ENCODE measurements at regions of chr10 and their contacts with region 1.

Region 1: GRCh38 chr10:119028900-119029612 is 458 bp upstream of the NANOS1 start:
- DNase-seq: peak; percentile 88 to 91
- ATAC-seq: peak; percentile 61 to 84
- H3K4me3 ChIP-seq: peak overlapping the region; percentile 83
- H3K27ac ChIP-seq: peak overlapping the region; percentile 82 to 85
- H3K4me1 ChIP-seq: peaks cover 31% of the 10 kb centered on the region
- CTCF ChIP-seq: no peak
- EP300 ChIP-seq: no peak
- POLR2A ChIP-seq: no peak
- RAD21 ChIP-seq: peak in 1 of 2 experiments; percentile 12; a peak in 1 of 5 replicates

Region 2: DNA sequence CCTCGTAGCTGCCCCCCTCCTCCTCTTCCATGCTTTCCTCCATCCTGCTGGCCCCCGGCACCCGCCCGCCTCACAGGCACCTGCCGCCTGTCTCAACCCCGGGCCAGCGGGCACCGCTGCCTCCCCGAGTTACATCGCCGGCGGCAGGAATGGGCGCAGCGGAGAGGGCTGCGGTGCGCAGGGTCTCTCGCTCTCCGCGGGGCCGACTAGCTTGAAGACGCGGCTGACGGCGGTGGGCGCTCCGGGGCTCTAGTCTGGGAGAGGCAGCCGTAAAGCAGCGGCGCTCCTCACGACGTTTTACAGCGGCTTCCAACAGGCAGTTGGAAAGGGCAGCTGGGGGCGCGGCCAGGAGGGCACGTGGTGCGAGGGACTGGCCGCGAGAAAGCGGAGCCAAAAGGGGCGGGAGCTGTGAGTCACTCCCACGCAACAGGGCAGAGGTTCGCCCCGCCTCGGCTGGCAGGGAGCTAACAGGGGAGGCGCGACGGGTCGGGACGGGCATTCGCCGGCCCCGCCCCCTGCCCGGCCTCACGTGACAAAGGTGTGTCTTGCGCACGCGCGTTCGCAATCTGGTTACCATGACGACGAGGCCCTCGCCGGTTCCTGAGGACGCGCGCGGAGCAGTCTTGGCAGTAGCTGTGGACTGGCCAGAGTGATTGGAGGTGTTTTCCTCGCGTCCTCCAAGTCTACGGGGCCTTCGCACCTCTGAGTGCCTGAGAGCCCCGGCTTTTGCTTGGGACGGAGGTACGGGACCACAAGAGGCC is 274.2 kb before region 1 on chr10 and contains the start of gene CACUL1:
- CTCF ChIA-PET with region 1: no interaction called
- POLR2A ChIA-PET with region 1: interaction called, 12 read pairs
- DNase-seq: peak; percentile 88 to 100
- ATAC-seq: peak; percentile 89 to 96
- H3K4me3 ChIP-seq: peak within 1 kb of the TSS; percentile 98
- H3K27ac ChIP-seq: peak within 1 kb of the TSS; percentile 92 to 93
- H3K4me1 ChIP-seq: peaks cover 19% of the 10 kb centered on the region
- CTCF ChIP-seq: no peak
- EP300 ChIP-seq: no peak
- POLR2A ChIP-seq: peak; percentile 68
- RAD21 ChIP-seq: 0 out of 5 replicates have a peak, but pooled peaks of 1 of the 2 experiments have one; percentile 2
- polyA plus RNA-seq, gene CACUL1: 14.3 and 15.6 TPM in 2 replicates

Region 3: GRCh38 chr10:119006451-119007210 is 22.4 kb before region 1 on chr10:
- CTCF ChIA-PET with region 1: interaction called, 16 read pairs
- POLR2A ChIA-PET with region 1: interaction called, 29 read pairs
- DNase-seq: peak; percentile 89 to 94
- ATAC-seq: peak; percentile 94 to 97
- H3K4me3 ChIP-seq: 0 out of 3 replicates have a peak overlapping the region, but pooled peaks have one; percentile 3
- H3K27ac ChIP-seq: peak overlapping the region; percentile 63 to 80
- H3K4me1 ChIP-seq: peaks cover 34% of the 10 kb centered on the region
- CTCF ChIP-seq: no peak
- EP300 ChIP-seq: peak; percentile 77; a peak in 3 of 5 replicates
- POLR2A ChIP-seq: no peak
- RAD21 ChIP-seq: peak in 1 of 2 experiments; percentile 63; a peak in 3 of 5 replicates

Region 4: GRCh38 chr10:119080521-119081260 is 51.6 kb after region 1 on chr10 and contains the start of gene EIF3A:
- CTCF ChIA-PET with region 1: no interaction called
- POLR2A ChIA-PET with region 1: no interaction called
- DNase-seq: peak; percentile 85 to 95
- ATAC-seq: peak; percentile 91 to 92
- H3K4me3 ChIP-seq: peak within 1 kb of the TSS; percentile 85
- H3K27ac ChIP-seq: peak within 1 kb of the TSS; percentile 96 to 99
- H3K4me1 ChIP-seq: peaks cover 28% of the 10 kb centered on the region; the same call in 2 of the 3 replicates
- CTCF ChIP-seq: no peak
- EP300 ChIP-seq: no peak
- POLR2A ChIP-seq: peak; percentile 94
- RAD21 ChIP-seq: no peak
- polyA plus RNA-seq, gene EIF3A: 71.0 and 134 TPM in 2 replicates